HCT116 (cell line): ENCODE measurements at regions of chr12 and their contacts with region 1.

Region 1: DNA sequence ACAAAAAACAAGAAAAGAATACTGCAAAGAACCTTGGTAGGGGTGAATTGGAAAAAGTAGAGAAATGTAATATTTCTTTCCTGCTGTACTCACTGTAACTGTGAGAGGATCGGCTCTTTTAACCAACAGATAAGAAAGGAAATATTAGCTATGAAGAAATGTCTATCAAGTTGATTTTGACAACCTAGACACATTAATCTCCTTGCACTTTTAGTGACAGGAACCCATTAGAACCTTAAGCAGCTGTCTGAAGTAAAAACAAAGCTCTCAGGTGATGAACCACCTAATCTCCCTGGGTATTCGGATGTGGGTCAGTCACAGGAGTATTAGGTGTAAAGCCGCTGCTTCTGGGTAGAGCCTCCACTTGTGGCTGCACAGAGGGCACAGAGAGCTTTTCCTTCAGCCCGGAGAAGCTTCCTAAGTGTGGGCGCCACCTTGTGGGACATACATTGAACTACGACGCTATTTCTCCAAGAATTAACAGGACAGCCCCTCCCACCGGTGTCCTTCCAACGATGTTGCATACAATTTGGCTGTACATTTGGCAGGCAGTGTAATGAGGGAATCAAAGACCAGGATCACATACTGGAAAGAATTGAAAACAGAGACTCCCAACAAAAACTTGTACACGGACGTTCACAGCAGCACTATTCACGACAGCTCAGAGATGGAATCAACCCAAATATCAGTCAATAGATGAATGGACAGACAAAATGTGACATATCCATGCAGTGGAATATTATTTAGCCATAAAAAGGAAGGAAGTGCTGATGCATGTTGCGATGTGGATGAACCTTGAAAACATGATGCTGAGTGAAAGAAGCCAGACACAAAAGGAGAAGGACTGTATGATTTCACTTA is 28.9 kb upstream of the MAPKAPK5 start:
- DNase-seq: peak; percentile 76
- ATAC-seq: peak; percentile 98
- H3K4me3 ChIP-seq: no peak overlapping the region
- H3K27ac ChIP-seq: no peak overlapping the region
- H3K4me1 ChIP-seq: peaks cover 0 to 6% of the 10 kb centered on the region in 2 experiments; a peak in 2 of 4 replicates
- H3K27me3 ChIP-seq: no peaks in the 10 kb centered on the region
- CTCF ChIP-seq: peak; percentile 78 to 88 (median 82)
- POLR2A ChIP-seq: no peak
- RAD21 ChIP-seq: peak; percentile 87

Region 2: DNA sequence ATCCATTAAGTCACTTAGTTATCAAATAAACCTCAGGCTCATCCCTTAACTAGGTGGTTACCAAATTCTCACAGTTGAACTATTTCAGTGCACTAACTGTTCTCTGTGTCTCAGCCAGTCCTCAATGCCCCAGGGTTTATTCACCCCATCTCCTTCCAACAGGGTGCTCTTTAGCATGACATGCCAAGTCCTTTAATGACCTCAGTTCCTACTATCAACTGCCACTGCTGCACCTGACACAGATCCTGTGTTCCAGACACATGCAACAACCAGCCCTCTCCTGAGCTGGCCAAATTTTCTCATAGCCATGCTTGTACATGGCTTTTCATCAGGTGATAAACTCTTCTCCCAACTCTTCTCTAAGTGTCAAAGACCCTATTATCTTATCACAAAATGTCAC is 294.0 kb before region 1 on chr12:
- CTCF ChIA-PET with region 1: no interaction called
- POLR2A ChIA-PET with region 1: no interaction called
- RAD21 ChIA-PET with region 1: no interaction called
- intact Hi-C with region 1: no loop called
- DNase-seq: no peak
- ATAC-seq: no peak
- H3K4me3 ChIP-seq: no peak overlapping the region
- H3K27ac ChIP-seq: no peak overlapping the region
- H3K4me1 ChIP-seq: no peaks in the 10 kb centered on the region
- H3K27me3 ChIP-seq: no peaks in the 10 kb centered on the region
- CTCF ChIP-seq: no peak
- POLR2A ChIP-seq: no peak
- RAD21 ChIP-seq: no peak

Region 3: GRCh38 chr12:111687255-111687654 is 125.9 kb before region 1 on chr12:
- CTCF ChIA-PET with region 1: interaction called, 4 read pairs
- POLR2A ChIA-PET with region 1: no interaction called
- RAD21 ChIA-PET with region 1: no interaction called
- intact Hi-C with region 1: loop called (anchors 1 kb)
- DNase-seq: no peak
- ATAC-seq: peak; percentile 46; the same call in 1 of the 2 replicates
- H3K4me3 ChIP-seq: peak overlapping the region; percentile 90 to 96; a peak in 3 of 4 replicates
- H3K27ac ChIP-seq: no peak overlapping the region
- H3K4me1 ChIP-seq: peaks cover 0 to 19% of the 10 kb centered on the region in 2 experiments
- H3K27me3 ChIP-seq: no peaks in the 10 kb centered on the region
- CTCF ChIP-seq: peak; percentile 33 to 61 (median 45); a peak in 5 of 6 replicates
- POLR2A ChIP-seq: no peak
- RAD21 ChIP-seq: peak; percentile 53

Region 4: DNA sequence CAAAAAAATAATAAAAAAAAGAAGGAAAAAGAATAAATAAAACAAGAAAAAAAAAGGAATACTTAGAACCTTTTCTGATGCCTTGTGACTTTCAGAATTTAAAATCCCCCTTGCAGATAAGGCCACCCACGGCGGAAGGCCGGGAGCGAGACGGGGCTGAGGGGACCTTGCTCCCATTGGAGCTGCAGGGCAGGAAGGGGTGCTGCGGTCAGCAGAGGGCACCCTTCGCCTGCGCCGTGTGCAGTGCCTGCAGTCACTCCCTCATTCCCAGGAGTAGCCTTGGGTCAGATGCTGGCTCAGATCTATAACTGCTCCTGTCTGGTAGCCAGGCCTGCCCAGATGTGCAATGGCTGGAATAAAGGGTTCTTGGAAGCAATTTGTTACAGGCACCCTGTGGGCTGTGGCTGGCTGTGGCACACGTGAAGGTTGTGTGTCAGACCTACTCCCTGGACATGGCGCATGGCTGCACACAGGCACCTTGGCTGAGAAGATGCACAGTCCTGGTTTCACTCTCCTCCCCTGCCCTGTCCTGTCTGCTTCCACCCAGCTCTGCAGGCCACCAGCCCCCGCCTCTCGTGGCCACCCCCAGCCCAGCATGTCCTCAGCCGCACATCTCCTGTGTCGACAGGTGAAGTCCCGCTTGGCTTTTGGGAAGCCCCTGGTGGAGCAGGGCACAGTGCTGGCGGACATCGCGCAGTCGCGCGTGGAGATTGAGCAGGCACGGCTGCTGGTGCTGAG is 59.8 kb before region 1 on chr12:
- CTCF ChIA-PET with region 1: interaction called, 42 read pairs
- POLR2A ChIA-PET with region 1: no interaction called
- RAD21 ChIA-PET with region 1: interaction called, 5 read pairs
- intact Hi-C with region 1: loop called (anchors 1 kb)
- DNase-seq: peak; percentile 2
- ATAC-seq: peak; percentile 97
- H3K4me3 ChIP-seq: no peak overlapping the region
- H3K27ac ChIP-seq: no peak overlapping the region
- H3K4me1 ChIP-seq: no peaks in the 10 kb centered on the region
- H3K27me3 ChIP-seq: no peaks in the 10 kb centered on the region
- CTCF ChIP-seq: peak; percentile 55 to 72 (median 61); a peak in 5 of 6 replicates
- POLR2A ChIP-seq: no peak
- RAD21 ChIP-seq: peak; percentile 78

Region 5: GRCh38 chr12:111868676-111869588 is 55.8 kb after region 1 on chr12:
- CTCF ChIA-PET with region 1: no interaction called
- POLR2A ChIA-PET with region 1: no interaction called
- RAD21 ChIA-PET with region 1: no interaction called
- intact Hi-C with region 1: no loop called
- DNase-seq: no peak
- ATAC-seq: no peak
- H3K4me3 ChIP-seq: no peak overlapping the region
- H3K27ac ChIP-seq: no peak overlapping the region
- H3K4me1 ChIP-seq: no peaks in the 10 kb centered on the region
- H3K27me3 ChIP-seq: no peaks in the 10 kb centered on the region
- CTCF ChIP-seq: no peak
- POLR2A ChIP-seq: no peak
- RAD21 ChIP-seq: no peak